ENCODE measurements at regions of chr19 and their contacts with region 1.

Region 1: GRCh38 chr19:9768175-9769112 is at the start of gene ZNF846:
- DNase-seq: peak; percentile 98
- H3K4me3 ChIP-seq: peak within 1 kb of the TSS; percentile 82
- H3K27ac ChIP-seq: peak within 1 kb of the TSS; percentile 77
- H3K4me1 ChIP-seq: peaks cover 15% of the 10 kb centered on the region
- CTCF ChIP-seq: no peak
- total RNA-seq, gene ZNF846: 10.6 and 11.7 TPM in 2 replicates

Region 2: GRCh38 chr19:9621156-9622037 is 147.0 kb before region 1 on chr19 and contains the start of gene ZNF561:
- CTCF ChIA-PET with region 1: interaction called, 3 read pairs
- POLR2A ChIA-PET with region 1: interaction called, 3 read pairs
- intact Hi-C with region 1: loop called (anchors 1 kb)
- DNase-seq: peak; percentile 92
- H3K4me3 ChIP-seq: peak within 1 kb of the TSS; percentile 78
- H3K27ac ChIP-seq: peak within 1 kb of the TSS; percentile 66
- H3K4me1 ChIP-seq: peaks cover 6% of the 10 kb centered on the region
- CTCF ChIP-seq: no peak
- total RNA-seq, gene ZNF561: 14.9 and 17.3 TPM in 2 replicates

Region 3: GRCh38 chr19:9674663-9675357 is 93.6 kb before region 1 on chr19 and contains the start of gene ZNF562:
- CTCF ChIA-PET with region 1: no interaction called
- POLR2A ChIA-PET with region 1: no interaction called
- intact Hi-C with region 1: loop called (anchors 2 kb)
- DNase-seq: peak; percentile 89
- H3K4me3 ChIP-seq: peak within 1 kb of the TSS; percentile 75
- H3K27ac ChIP-seq: peak within 1 kb of the TSS; percentile 55
- H3K4me1 ChIP-seq: no peaks in the 10 kb centered on the region
- CTCF ChIP-seq: no peak
- total RNA-seq, gene ZNF562: 14.9 and 18.1 TPM in 2 replicates

Region 4: GRCh38 chr19:9818734-9819589 is 50.5 kb after region 1 on chr19 and contains the start of gene FBXL12:
- CTCF ChIA-PET with region 1: no interaction called
- POLR2A ChIA-PET with region 1: no interaction called
- intact Hi-C with region 1: loop called (anchors 1 kb)
- DNase-seq: peak; percentile 99
- H3K4me3 ChIP-seq: peak within 1 kb of the TSS; percentile 95
- H3K27ac ChIP-seq: peak within 1 kb of the TSS; percentile 77
- H3K4me1 ChIP-seq: peaks cover 20% of the 10 kb centered on the region
- CTCF ChIP-seq: no peak
- total RNA-seq, gene FBXL12: 22.3 and 38.7 TPM in 2 replicates

Measured in OCI-LY7 (cell line).